Common myeloid progenitor, CD34-positive (primary cell): ENCODE measurements at regions of chr14 and their contacts with region 1.

Region 1: DNA sequence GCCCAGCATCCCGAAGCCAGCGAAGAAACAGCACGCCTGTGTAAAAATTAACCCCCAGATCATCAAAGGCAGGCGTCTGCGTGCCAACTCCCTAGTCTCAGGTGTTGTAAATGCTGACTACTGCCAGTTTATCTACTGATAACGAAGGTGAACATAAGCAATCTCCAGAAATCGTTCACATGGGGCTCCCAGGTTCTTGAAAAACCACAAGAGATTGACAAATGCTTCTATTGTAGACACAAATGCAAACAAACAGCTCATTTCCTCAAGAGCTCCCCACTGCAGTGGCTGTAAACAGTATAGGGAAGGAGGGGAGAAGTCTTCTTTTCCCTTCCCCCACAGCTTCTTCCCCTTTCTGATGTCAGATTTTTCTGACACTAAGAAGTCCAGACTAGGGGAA is 5.3 kb upstream of the PLEKHG3 start:
- DNase-seq: peak; percentile 51 to 79 (median 79)
- H3K4me3 ChIP-seq: peak overlapping the region in 3 of 7 experiments; percentile 6 to 32 (median 19)
- H3K27ac ChIP-seq: no peak overlapping the region
- H3K4me1 ChIP-seq: peaks cover 13 to 73% (median 25%) of the 10 kb centered on the region in 4 experiments
- H3K27me3 ChIP-seq: peaks cover 0 to 39% (median 29%) of the 10 kb centered on the region in 5 experiments

Region 2: GRCh38 chr14:64688811-64689281 is 10.1 kb before region 1 on chr14:
- CTCF ChIA-PET with region 1: interaction called, 14 read pairs
- POLR2A ChIA-PET with region 1: no interaction called
- DNase-seq: peak in 1 of 3 donors; percentile 30
- H3K4me3 ChIP-seq: no peak overlapping the region
- H3K27ac ChIP-seq: no peak overlapping the region
- H3K4me1 ChIP-seq: peaks cover 5 to 47% (median 11%) of the 10 kb centered on the region in 4 experiments
- H3K27me3 ChIP-seq: peaks cover 0 to 22% (median 6%) of the 10 kb centered on the region in 5 experiments